GM12878 (cell line): ENCODE measurements at regions of chr15 and their contacts with region 1.

Region 1: DNA sequence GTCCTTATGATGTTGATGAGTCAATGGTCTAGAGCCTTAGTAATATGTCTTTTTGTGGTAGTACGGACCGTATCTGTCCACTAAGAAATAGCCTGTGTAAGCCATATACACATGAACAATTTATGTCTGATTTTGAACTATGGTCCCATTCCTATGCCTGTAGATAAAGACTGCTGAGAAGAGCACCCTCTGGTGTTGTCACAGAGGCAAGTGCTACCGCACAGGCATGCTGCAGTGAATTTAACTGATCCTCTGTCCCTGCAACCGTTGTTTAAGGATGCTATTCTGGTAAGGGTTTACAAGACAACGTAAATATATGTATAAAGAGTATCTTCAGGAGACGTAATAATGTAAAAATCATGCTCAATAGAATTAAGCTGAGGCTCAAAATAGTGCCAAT is 170.7 kb downstream of the UBE3A start:
- DNase-seq: no peak
- ATAC-seq: no peak
- H3K4me3 ChIP-seq: no peak overlapping the region
- H3K27ac ChIP-seq: no peak overlapping the region
- H3K4me1 ChIP-seq: no peaks in the 10 kb centered on the region
- H3K27me3 ChIP-seq: no peaks in the 10 kb centered on the region
- CTCF ChIP-seq: no peak; a peak in 1 of 6 replicates
- EP300 ChIP-seq: no peak
- POLR2A ChIP-seq: no peak
- RAD21 ChIP-seq: no peak

Region 2: GRCh38 chr15:25134546-25134945 is 133.6 kb before region 1 on chr15:
- CTCF ChIA-PET with region 1: no interaction called
- POLR2A ChIA-PET with region 1: no interaction called
- RAD21 ChIA-PET with region 1: no interaction called
- SMC1A ChIA-PET with region 1: no interaction called
- in situ Hi-C with region 1: no loop called
- intact Hi-C with region 1: no loop called
- DNase-seq: no peak
- ATAC-seq: no peak
- H3K4me3 ChIP-seq: no peak overlapping the region
- H3K27ac ChIP-seq: no peak overlapping the region
- H3K4me1 ChIP-seq: no peaks in the 10 kb centered on the region
- H3K27me3 ChIP-seq: no peaks in the 10 kb centered on the region
- CTCF ChIP-seq: no peak
- EP300 ChIP-seq: no peak
- POLR2A ChIP-seq: no peak
- RAD21 ChIP-seq: no peak

Region 3: GRCh38 chr15:25220834-25221233 is 47.3 kb before region 1 on chr15:
- CTCF ChIA-PET with region 1: no interaction called
- POLR2A ChIA-PET with region 1: no interaction called
- RAD21 ChIA-PET with region 1: no interaction called
- SMC1A ChIA-PET with region 1: no interaction called
- in situ Hi-C with region 1: loop called (anchors 5 kb)
- intact Hi-C with region 1: no loop called
- DNase-seq: no peak
- ATAC-seq: no peak
- H3K4me3 ChIP-seq: no peak overlapping the region
- H3K27ac ChIP-seq: no peak overlapping the region
- H3K4me1 ChIP-seq: no peaks in the 10 kb centered on the region
- H3K27me3 ChIP-seq: no peaks in the 10 kb centered on the region
- CTCF ChIP-seq: no peak
- EP300 ChIP-seq: no peak
- POLR2A ChIP-seq: no peak
- RAD21 ChIP-seq: no peak